Esophagus squamous epithelium (tissue), 5 donors: ENCODE measurements at regions of chr3 and their contacts with region 1.

Region 1: DNA sequence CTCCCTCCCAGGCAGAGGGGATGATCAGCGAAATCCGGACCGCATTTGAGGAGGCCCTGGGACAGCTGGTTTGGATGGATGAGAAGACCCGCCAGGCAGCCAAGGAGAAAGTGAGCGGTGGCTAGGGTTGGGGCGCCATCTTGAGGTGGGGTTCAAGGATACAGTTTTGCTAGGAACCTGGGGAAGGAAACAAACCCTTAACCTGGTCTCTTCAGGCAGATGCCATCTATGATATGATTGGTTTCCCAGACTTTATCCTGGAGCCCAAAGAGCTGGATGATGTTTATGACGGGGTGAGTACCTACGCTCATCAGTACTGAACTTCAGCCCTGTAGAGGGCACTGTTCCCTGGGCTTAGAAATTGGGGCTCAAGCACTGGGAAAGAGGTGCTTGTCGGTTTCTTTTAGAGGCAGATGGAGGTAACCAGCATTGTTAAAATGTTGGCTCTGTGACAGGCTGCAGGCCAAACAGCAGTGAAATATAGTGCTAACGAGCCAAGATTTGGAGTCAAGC is 9.6 kb upstream of the PSMD2 start:
- DNase-seq: no peak
- H3K4me3 ChIP-seq: no peak overlapping the region
- H3K27ac ChIP-seq: no peak overlapping the region
- H3K4me1 ChIP-seq: no peaks in the 10 kb centered on the region
- H3K27me3 ChIP-seq: peaks cover 0 to 24% (median 0%) of the 10 kb centered on the region in 4 donors
- CTCF ChIP-seq: peak; percentile 25 to 63 (median 41)
- POLR2A ChIP-seq: no peak

Region 2: DNA sequence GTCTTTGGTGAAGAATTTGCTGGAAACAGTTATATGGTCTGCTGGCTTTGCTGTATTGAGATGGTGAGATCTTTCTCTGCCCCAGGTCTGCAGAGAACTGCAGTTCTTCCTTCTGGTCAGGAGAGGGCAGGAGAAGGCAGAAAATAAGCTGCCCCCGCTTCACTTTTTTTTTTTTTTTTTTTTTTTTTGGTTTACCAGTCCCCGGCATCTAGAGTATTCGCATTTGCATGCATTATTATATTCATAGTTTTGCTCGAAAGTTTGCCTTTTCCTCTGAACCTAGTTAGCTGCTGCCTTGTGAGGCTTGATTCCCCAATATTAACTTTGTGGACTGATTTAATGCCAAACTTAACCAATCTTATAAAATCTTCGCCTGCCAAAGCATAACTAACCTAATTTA is 394.2 kb before region 1 on chr3:
- intact Hi-C with region 1: loop called (anchors 10 kb)
- DNase-seq: no peak
- H3K4me3 ChIP-seq: no peak overlapping the region
- H3K27ac ChIP-seq: no peak overlapping the region
- H3K4me1 ChIP-seq: peaks cover 0 to 32% (median 0%) of the 10 kb centered on the region in 3 donors
- H3K27me3 ChIP-seq: peaks cover 0 to 20% (median 0%) of the 10 kb centered on the region in 4 donors
- CTCF ChIP-seq: peak; percentile 68 to 80 (median 76)
- POLR2A ChIP-seq: no peak

Region 3: DNA sequence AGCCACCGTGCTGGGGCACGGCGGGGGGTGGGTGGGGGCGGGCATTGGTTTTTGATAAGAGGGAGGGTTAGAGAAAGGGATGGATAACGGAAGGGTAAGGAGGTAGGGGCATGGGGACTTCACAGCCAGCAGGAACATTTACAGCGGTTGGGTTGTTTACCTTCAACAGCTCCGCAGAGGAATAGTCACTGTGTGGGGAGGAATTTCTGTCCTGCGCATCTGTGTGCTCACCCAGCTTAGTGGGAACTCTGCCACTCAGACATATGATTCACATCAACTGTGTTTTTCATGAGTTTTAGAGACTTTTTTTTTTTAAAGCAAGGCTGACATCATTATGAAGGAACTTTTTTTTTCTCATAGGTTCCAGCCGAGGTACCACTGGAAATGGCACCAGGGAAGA is 109.9 kb after region 1 on chr3:
- intact Hi-C with region 1: no loop called
- DNase-seq: no peak
- H3K4me3 ChIP-seq: no peak overlapping the region
- H3K27ac ChIP-seq: no peak overlapping the region
- H3K4me1 ChIP-seq: no peaks in the 10 kb centered on the region
- H3K27me3 ChIP-seq: peaks cover 0 to 25% (median 0%) of the 10 kb centered on the region in 4 donors
- CTCF ChIP-seq: no peak
- POLR2A ChIP-seq: no peak

Region 4: GRCh38 chr3:184440151-184440550 is 150.7 kb after region 1 on chr3:
- intact Hi-C with region 1: no loop called
- DNase-seq: no peak
- H3K4me3 ChIP-seq: no peak overlapping the region
- H3K27ac ChIP-seq: peak overlapping the region in 3 of 4 donors; percentile 39 to 50 (median 43)
- H3K4me1 ChIP-seq: peaks cover 8 to 52% (median 12%) of the 10 kb centered on the region in 3 donors
- H3K27me3 ChIP-seq: no peaks in the 10 kb centered on the region
- CTCF ChIP-seq: no peak
- POLR2A ChIP-seq: no peak